Activated B cell treated with CpG ODN at 0.5 μM for 24 hours (primary cell): ENCODE measurements at regions of chr9 and their contacts with region 1.

Region 1: DNA sequence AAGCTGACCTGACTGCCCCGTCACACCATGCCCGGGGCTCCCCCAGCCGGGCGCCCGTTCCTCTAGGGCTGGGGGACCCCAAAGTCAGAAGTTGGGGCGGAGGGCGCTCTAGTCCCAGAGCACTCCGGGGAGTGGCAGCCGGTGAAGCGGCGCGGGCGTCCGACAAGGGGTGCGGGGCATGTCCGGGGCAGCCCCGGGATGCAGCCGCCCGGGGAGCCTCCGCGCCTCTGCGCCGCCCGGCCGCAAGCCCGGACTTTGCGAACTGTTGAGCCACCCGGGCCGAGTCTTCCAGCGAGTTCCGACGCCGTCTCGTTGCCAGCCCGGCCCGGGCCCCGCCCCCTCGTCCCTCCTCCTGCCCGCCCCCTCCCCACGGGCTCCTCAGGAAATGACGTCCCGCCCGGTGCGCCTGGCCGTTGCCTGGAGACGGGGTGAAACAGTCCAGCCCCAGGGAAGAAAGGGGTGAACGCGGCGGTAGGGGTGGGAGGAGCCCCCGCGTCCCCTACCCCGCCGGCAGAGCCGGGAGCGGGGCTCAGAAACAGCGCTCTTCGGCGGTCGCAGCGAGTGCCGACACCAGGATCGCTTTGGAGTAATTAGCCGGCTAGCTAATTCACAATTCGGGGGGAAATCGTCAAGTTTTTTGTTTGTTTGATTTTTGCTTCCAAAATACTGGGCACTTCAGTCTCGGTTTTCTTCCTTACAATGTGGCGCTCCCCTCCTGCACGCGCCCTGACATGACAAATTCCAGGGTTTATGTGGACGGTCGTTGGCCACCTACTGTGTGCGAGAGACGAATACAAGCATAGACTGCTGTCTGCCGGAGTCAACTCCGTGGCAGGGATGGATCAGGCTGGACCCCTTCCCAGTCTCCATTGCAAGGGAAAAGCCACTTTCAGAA is at the start of gene WHRN:
- DNase-seq: peak; percentile 84
- ATAC-seq: peak; percentile 85
- H3K4me3 Mint-ChIP-seq: peak within 1 kb of the TSS; percentile 86
- H3K27ac Mint-ChIP-seq: peak within 1 kb of the TSS; percentile 79
- H3K4me1 Mint-ChIP-seq: peaks cover 51% of the 10 kb centered on the region
- H3K27me3 Mint-ChIP-seq: peaks cover 8% of the 10 kb centered on the region
- CTCF ChIP-seq: no peak
- total RNA-seq, gene WHRN: 12.4 and 14.5 TPM in 2 replicates

Region 2: GRCh38 chr9:114174876-114175771 is 330.3 kb before region 1 on chr9:
- CTCF ChIA-PET with region 1: no interaction called
- POLR2A ChIA-PET with region 1: no interaction called
- intact Hi-C with region 1: no loop called
- DNase-seq: no peak
- ATAC-seq: no peak
- H3K4me3 Mint-ChIP-seq: no peak overlapping the region
- H3K27ac Mint-ChIP-seq: no peak overlapping the region
- H3K4me1 Mint-ChIP-seq: no peaks in the 10 kb centered on the region
- H3K27me3 Mint-ChIP-seq: peaks cover 5% of the 10 kb centered on the region
- CTCF ChIP-seq: no peak

Region 3: DNA sequence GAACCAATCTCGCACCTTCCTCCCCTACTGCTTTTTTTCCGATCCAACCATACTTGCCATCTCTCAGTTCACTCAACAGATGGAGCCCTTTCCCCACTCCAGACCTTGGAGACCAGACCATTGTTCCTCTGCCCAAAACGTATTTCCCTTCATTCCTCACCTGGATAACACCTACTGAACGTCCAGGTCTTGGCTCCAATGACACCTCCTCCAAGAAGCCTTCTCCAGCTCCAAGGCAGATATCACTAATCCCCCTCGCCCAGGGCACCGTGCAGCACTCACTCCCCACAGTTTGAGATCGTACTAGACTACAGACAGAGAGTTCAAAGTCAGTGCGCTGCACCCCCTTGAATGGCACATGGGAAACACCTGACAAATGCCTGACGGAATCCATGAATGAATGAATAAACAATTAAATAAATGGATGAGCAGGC is 70.5 kb before region 1 on chr9:
- CTCF ChIA-PET with region 1: interaction called, 49 read pairs
- POLR2A ChIA-PET with region 1: no interaction called
- intact Hi-C with region 1: loop called (anchors 1 kb)
- DNase-seq: no peak
- ATAC-seq: peak; percentile 81
- H3K4me3 Mint-ChIP-seq: no peak overlapping the region
- H3K27ac Mint-ChIP-seq: no peak overlapping the region
- H3K4me1 Mint-ChIP-seq: no peaks in the 10 kb centered on the region
- H3K27me3 Mint-ChIP-seq: no peaks in the 10 kb centered on the region
- CTCF ChIP-seq: no peak

Region 4: DNA sequence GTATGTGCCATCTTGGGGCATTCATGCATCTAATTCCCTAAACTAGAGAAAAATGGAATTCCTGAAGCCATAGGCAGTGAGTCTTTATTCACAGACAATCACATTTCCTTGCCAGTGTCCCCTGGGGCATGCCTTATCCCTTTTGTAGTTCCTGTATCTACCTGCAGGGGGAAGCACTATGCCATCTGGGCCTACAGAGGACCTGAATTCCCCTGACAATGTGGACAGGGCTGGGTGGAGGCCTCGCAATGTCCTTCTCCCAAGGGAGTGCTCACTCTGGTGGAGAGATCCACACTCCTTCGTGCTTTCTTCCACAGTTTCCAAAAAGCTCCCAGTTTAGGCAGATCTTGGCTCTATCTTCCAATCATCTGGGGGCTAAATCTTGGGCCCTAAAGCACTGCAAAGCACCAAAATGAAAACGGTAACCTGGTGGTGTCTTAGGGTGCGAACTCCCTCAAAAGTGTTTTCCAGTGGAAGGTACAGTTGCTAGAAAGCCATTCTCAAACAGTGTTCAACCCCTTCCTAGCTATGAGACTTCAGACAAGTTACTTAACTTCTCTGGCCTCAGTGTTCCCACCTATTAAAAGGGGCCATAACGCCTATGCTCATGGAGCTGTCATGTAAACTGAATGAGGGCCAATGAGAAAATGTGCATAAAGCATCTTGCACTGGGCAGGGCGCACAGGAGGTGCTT is 17.7 kb before region 1 on chr9:
- CTCF ChIA-PET with region 1: interaction called, 17 read pairs
- POLR2A ChIA-PET with region 1: no interaction called
- intact Hi-C with region 1: loop called (anchors 1 kb)
- DNase-seq: no peak
- ATAC-seq: peak; percentile 85
- H3K4me3 Mint-ChIP-seq: no peak overlapping the region
- H3K27ac Mint-ChIP-seq: no peak overlapping the region
- H3K4me1 Mint-ChIP-seq: peaks cover 39% of the 10 kb centered on the region
- H3K27me3 Mint-ChIP-seq: no peaks in the 10 kb centered on the region
- CTCF ChIP-seq: peak; percentile 41

Region 5: GRCh38 chr9:114616653-114617520 is 111.5 kb after region 1 on chr9:
- CTCF ChIA-PET with region 1: no interaction called
- POLR2A ChIA-PET with region 1: interaction called, 6 read pairs
- intact Hi-C with region 1: loop called (anchors 2 kb)
- DNase-seq: peak; percentile 73
- ATAC-seq: peak; percentile 76
- H3K4me3 Mint-ChIP-seq: peak overlapping the region; percentile 74
- H3K27ac Mint-ChIP-seq: peak overlapping the region; percentile 98
- H3K4me1 Mint-ChIP-seq: peaks cover 83% of the 10 kb centered on the region
- H3K27me3 Mint-ChIP-seq: no peaks in the 10 kb centered on the region
- CTCF ChIP-seq: no peak